CD4-positive, alpha-beta T cell (primary cell): ENCODE measurements at regions of chr1 and their contacts with region 1.

Region 1: DNA sequence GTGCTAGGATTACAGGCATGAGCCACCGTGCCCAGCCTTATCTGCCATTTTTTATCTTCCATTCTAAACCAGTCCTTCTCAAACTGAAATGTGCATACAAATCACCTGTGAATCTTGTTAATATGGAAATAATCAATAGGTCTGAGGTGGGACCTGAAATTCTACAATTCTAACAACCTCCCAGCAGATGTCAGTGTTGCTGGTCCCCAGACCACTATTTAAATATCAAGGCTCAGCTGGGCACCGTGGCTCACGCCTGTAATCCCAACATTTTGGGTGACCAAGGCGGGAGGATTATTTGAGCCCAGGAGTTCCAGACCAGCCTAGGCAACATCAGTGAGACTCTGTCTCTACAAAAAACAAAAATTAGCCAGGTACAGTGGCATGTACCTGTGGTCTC is 4.1 kb downstream of the UQCRHL start:
- DNase-seq: peak in 5 of 14 experiments; percentile 4 to 57 (median 29)
- ATAC-seq: peak; percentile 32
- H3K4me3 ChIP-seq: no peak overlapping the region
- H3K4me3 Mint-ChIP-seq: no peak overlapping the region
- H3K27ac ChIP-seq: no peak overlapping the region
- H3K27ac Mint-ChIP-seq: no peak overlapping the region
- H3K4me1 ChIP-seq: peaks cover 2% of the 10 kb centered on the region
- H3K4me1 Mint-ChIP-seq: no peaks in the 10 kb centered on the region
- H3K27me3 ChIP-seq: peaks cover 0 to 2% of the 10 kb centered on the region in 2 experiments
- H3K27me3 Mint-ChIP-seq: peaks cover 10% of the 10 kb centered on the region
- CTCF ChIP-seq: peak; percentile 51

Region 2: GRCh38 chr1:15785683-15786082 is 17.7 kb before region 1 on chr1:
- CTCF ChIA-PET with region 1: no interaction called
- POLR2A ChIA-PET with region 1: no interaction called
- intact Hi-C with region 1: no loop called
- DNase-seq: no peak
- ATAC-seq: no peak
- H3K4me3 ChIP-seq: no peak overlapping the region
- H3K4me3 Mint-ChIP-seq: no peak overlapping the region
- H3K27ac ChIP-seq: no peak overlapping the region
- H3K27ac Mint-ChIP-seq: no peak overlapping the region
- H3K4me1 ChIP-seq: no peaks in the 10 kb centered on the region
- H3K4me1 Mint-ChIP-seq: no peaks in the 10 kb centered on the region
- H3K27me3 ChIP-seq: peaks cover 0 to 7% of the 10 kb centered on the region in 2 experiments
- H3K27me3 Mint-ChIP-seq: peaks cover 2% of the 10 kb centered on the region
- CTCF ChIP-seq: no peak

Region 3: DNA sequence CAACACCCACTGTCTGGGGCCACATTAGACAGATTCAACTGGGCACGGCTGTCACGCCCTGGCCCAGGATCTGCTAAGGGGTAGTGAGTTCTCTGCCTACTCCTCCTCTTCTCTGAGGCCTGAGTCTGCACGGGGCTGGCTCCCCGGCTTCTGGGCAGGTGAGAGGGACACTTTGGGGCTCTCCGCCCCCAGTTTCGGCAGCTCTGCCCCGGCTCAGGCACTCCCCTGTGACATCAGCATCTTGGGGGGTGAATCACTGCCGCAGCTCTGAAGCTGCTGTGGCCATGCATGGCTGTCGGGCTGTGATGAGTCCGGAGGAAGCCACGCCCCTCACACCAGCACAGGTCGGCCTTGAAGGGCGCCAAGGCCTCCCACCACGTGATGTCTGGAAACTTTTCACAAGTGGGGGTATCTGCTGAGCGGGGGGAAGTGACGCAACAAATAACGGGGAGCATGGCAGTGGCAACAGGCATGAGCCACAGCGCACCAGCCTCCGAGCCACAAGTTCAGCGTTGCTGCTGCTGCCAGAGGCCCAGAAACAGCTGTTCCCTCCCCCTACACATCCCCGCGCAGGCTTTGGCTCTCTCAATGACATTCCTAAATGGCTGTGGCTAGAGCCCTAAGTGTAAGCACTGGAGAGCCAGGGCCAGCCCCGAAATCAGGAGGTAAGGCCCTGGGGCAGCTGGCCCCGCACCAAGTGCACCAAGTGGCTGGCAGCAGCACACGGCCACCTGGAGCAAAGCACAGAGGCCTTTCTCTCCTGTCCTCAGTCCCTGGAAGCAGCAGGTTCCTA is 146.3 kb after region 1 on chr1:
- CTCF ChIA-PET with region 1: no interaction called
- POLR2A ChIA-PET with region 1: no interaction called
- intact Hi-C with region 1: no loop called
- DNase-seq: peak; percentile 60 to 99 (median 80)
- ATAC-seq: peak; percentile 88
- H3K4me3 ChIP-seq: peak overlapping the region; percentile 35
- H3K4me3 Mint-ChIP-seq: peak overlapping the region; percentile 83
- H3K27ac ChIP-seq: peak overlapping the region; percentile 77 to 89
- H3K27ac Mint-ChIP-seq: peak overlapping the region; percentile 98
- H3K4me1 ChIP-seq: peaks cover 71% of the 10 kb centered on the region
- H3K4me1 Mint-ChIP-seq: peaks cover 61% of the 10 kb centered on the region
- H3K27me3 ChIP-seq: no peaks in the 10 kb centered on the region
- H3K27me3 Mint-ChIP-seq: no peaks in the 10 kb centered on the region
- CTCF ChIP-seq: no peak

Region 4: GRCh38 chr1:15994590-15995351 is 191.4 kb after region 1 on chr1:
- CTCF ChIA-PET with region 1: no interaction called
- POLR2A ChIA-PET with region 1: no interaction called
- intact Hi-C with region 1: loop called in 1 of 2 experiments (anchors 10 kb)
- DNase-seq: peak in 10 of 14 experiments; percentile 10 to 67 (median 24)
- ATAC-seq: peak; percentile 44
- H3K4me3 ChIP-seq: no peak overlapping the region
- H3K4me3 Mint-ChIP-seq: no peak overlapping the region
- H3K27ac ChIP-seq: no peak overlapping the region
- H3K27ac Mint-ChIP-seq: no peak overlapping the region
- H3K4me1 ChIP-seq: no peaks in the 10 kb centered on the region
- H3K4me1 Mint-ChIP-seq: no peaks in the 10 kb centered on the region
- H3K27me3 ChIP-seq: no peaks in the 10 kb centered on the region
- H3K27me3 Mint-ChIP-seq: no peaks in the 10 kb centered on the region
- CTCF ChIP-seq: peak; percentile 43

Region 5: GRCh38 chr1:16009030-16009709 is 205.8 kb after region 1 on chr1:
- CTCF ChIA-PET with region 1: no interaction called
- POLR2A ChIA-PET with region 1: no interaction called
- intact Hi-C with region 1: loop called in 1 of 2 experiments (anchors 5 kb)
- DNase-seq: peak; percentile 58 to 81 (median 64)
- ATAC-seq: peak; percentile 65
- H3K4me3 ChIP-seq: no peak overlapping the region
- H3K4me3 Mint-ChIP-seq: no peak overlapping the region
- H3K27ac ChIP-seq: no peak overlapping the region
- H3K27ac Mint-ChIP-seq: no peak overlapping the region
- H3K4me1 ChIP-seq: peaks cover 14% of the 10 kb centered on the region
- H3K4me1 Mint-ChIP-seq: no peaks in the 10 kb centered on the region
- H3K27me3 ChIP-seq: peaks cover 0 to 5% of the 10 kb centered on the region in 2 experiments
- H3K27me3 Mint-ChIP-seq: peaks cover 14% of the 10 kb centered on the region
- CTCF ChIP-seq: peak; percentile 99

Region 6: DNA sequence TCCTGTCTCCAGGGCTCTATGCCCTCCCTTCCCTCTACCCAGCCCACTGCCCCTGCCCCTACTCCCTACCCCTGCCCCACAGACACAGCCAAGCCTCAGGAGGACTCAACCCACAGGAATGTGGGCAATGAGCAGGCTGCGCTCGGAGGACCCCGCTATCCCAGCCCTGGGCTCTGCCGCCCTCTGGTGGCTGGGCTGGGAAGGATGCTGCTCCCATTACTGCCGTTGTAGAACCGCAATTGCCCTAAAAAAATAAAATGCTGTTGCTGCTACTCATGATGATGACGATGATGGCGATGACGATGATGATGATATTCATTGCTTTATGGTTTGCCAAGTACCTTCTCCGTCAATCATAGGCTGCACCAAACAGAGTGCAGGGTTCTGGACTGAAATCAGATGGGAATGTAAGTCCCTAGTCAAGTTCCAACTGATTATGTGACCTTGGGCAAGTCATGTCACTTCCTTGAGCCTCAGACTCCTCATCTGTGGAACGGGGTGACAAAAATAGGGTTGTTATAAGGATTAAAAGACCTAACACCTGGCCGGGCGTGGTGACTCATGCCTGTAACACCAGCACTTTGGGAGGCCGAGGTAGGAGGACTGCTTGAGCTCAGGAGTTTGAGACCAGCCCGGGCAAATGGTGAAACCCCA is 384.5 kb after region 1 on chr1:
- CTCF ChIA-PET with region 1: no interaction called
- POLR2A ChIA-PET with region 1: no interaction called
- intact Hi-C with region 1: loop called in 1 of 2 experiments (anchors 10 kb)
- DNase-seq: peak; percentile 57 to 88 (median 75)
- ATAC-seq: peak; percentile 91
- H3K4me3 ChIP-seq: no peak overlapping the region
- H3K4me3 Mint-ChIP-seq: no peak overlapping the region
- H3K27ac ChIP-seq: no peak overlapping the region
- H3K27ac Mint-ChIP-seq: no peak overlapping the region
- H3K4me1 ChIP-seq: peaks cover 7% of the 10 kb centered on the region
- H3K4me1 Mint-ChIP-seq: no peaks in the 10 kb centered on the region
- H3K27me3 ChIP-seq: peaks cover 0 to 4% of the 10 kb centered on the region in 2 experiments
- H3K27me3 Mint-ChIP-seq: peaks cover 10% of the 10 kb centered on the region
- CTCF ChIP-seq: peak; percentile 97

Region 7: DNA sequence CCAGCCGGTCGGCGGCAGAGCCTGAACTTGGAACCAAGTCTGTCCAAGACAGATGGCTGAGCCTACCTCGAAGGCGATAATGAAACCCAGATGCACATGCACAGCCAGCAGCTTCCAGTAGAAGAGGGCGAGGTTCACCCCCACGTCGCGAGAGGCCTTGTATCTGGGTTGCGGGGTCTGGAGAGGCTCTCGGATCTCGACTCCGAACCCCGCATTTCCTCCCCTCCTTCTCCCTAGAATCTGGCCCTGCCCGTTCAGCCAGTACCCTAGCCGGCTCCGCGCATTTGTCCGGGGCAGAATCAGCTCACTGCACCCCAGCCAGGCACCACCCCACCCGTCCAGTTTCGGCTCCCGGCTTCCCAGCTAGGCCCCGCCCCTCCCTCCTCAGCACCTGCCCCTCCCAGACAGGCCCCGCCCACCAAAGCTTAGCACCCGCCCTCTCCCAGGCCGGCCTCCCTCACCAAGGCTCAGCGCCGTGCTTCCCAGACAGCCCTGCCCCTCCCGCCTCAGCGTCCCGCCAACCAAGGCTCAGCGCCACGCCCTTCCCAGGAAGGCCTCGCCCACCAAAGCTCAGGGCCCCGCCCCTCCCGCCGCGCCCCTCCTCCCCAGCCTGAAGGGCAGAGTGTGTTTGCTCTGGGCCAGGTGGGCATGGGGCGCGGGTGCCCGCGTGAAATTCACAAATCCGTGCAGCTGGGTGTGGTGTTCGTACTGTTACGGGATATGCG is 413.9 kb after region 1 on chr1:
- CTCF ChIA-PET with region 1: no interaction called
- POLR2A ChIA-PET with region 1: no interaction called
- intact Hi-C with region 1: no loop called
- DNase-seq: peak; percentile 84 to 98 (median 93)
- ATAC-seq: peak; percentile 97
- H3K4me3 ChIP-seq: peak overlapping the region; percentile 74
- H3K4me3 Mint-ChIP-seq: peak overlapping the region; percentile 89
- H3K27ac ChIP-seq: no peak overlapping the region
- H3K27ac Mint-ChIP-seq: peak overlapping the region; percentile 50
- H3K4me1 ChIP-seq: peaks cover 28% of the 10 kb centered on the region
- H3K4me1 Mint-ChIP-seq: peaks cover 29% of the 10 kb centered on the region
- H3K27me3 ChIP-seq: peaks cover 0 to 2% of the 10 kb centered on the region in 2 experiments
- H3K27me3 Mint-ChIP-seq: no peaks in the 10 kb centered on the region
- CTCF ChIP-seq: no peak

Region 8: DNA sequence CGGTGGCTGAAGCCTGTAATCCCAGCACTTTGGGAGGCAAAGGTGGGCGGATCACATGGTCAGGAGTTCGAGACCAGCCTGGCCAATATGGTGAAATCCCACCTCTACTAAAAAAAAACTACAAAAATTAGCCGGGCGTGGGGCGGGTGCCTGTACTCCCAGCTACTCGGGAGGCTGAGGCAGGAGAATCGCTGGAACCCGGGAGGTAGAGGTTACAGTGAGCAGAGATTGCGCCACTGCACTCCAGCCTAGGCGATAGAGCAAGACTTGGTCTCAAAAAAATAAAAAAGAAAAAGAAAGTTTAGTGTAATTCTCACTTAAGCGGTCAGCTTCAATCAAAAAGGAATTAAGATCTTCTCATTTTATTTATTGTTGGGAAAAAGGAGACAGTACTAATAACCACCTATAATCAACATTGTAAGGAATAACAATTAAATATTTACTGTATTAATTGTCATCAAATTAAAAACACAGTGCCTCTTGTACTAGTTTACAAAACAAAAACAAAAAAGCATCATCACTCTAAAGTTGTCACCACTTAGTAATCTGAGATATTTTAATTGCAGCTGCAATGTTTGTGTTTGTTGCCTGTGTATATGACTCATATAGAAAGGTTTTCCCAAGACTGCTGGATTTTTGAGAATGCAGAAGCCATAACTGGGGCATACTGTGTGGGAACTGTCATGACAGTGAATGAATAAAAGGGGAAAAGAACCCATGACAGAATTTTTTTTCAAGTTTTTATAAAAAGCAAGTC is 545.2 kb after region 1 on chr1:
- CTCF ChIA-PET with region 1: no interaction called
- POLR2A ChIA-PET with region 1: no interaction called
- intact Hi-C with region 1: no loop called
- DNase-seq: peak in 2 of 14 experiments; percentile 33 to 42
- ATAC-seq: no peak
- H3K4me3 ChIP-seq: no peak overlapping the region
- H3K4me3 Mint-ChIP-seq: peak overlapping the region; percentile 54
- H3K27ac ChIP-seq: no peak overlapping the region
- H3K27ac Mint-ChIP-seq: no peak overlapping the region
- H3K4me1 ChIP-seq: peaks cover 36% of the 10 kb centered on the region
- H3K4me1 Mint-ChIP-seq: peaks cover 42% of the 10 kb centered on the region
- H3K27me3 ChIP-seq: no peaks in the 10 kb centered on the region
- H3K27me3 Mint-ChIP-seq: no peaks in the 10 kb centered on the region
- CTCF ChIP-seq: no peak